ENCODE measurements at regions of chr3 and their contacts with region 1.

Region 1: DNA sequence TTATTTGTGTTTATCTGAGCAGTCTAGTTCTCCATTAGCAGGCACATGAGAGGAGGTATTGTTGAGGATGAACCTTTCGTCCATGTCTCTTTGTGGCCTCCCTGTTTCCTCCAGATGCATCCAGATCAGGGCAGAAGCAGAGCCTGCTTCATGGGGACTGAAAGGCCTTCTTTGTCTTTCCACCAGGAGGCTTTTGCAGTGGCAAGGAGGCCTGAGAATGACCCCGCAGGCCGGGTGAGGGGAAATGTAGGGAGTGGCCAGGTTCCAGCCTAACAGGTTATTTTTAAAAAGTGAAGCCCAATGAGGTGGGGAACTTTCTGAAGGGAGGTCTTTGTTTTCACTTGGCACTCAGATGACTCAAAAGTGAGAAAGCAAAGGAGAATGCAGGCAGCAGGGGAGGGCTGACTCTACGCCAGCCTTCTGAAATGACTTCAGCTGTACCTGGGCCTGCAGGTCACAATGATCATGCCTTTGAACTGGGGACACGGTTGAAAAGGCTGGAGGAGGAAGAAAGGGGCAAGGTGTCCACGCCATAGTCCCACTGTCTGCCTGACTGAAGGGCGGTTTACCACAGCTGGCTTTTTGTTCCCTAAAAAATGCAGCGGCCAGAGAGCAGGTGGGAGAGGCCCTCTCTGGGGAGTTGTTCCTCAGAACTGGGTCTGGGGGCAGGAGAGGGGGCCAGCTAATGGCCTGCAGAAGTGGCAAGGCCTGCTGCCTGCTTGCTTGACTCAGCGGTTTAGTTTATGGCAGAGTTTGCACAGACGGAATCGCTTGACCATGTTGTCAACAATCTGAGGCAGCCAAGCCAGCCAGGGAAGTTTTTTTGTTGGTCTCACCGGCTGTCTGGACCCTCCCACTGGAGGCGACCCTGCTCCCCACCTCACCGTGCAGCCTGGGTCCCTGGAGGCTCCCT is 28.7 kb downstream of the CMTM7 start:
- DNase-seq: peak in 1 of 5 donors; percentile 57
- H3K4me3 ChIP-seq: no peak overlapping the region
- H3K4me3 Mint-ChIP-seq: peak overlapping the region in 5 of 7 donors; percentile 13 to 88 (median 47)
- H3K27ac ChIP-seq: no peak overlapping the region
- H3K27ac Mint-ChIP-seq: peak overlapping the region; percentile 51 to 98 (median 78)
- H3K4me1 ChIP-seq: peaks cover 94% of the 10 kb centered on the region
- H3K4me1 Mint-ChIP-seq: peaks cover 68 to 98% (median 82%) of the 10 kb centered on the region in 3 donors
- H3K27me3 ChIP-seq: no peaks in the 10 kb centered on the region
- H3K27me3 Mint-ChIP-seq: peaks cover 0 to 3% of the 10 kb centered on the region in 2 donors

Region 2: GRCh38 chr3:32401556-32402081 is 18.8 kb before region 1 on chr3:
- CTCF ChIA-PET with region 1: interaction called, 13 read pairs
- POLR2A ChIA-PET with region 1: interaction called, 6 read pairs
- DNase-seq: peak; percentile 38 to 78 (median 57)
- H3K4me3 ChIP-seq: peak overlapping the region; percentile 67
- H3K4me3 Mint-ChIP-seq: peak overlapping the region; percentile 84 to 98 (median 91)
- H3K27ac ChIP-seq: peak overlapping the region; percentile 73
- H3K27ac Mint-ChIP-seq: peak overlapping the region; percentile 93 to 99 (median 96)
- H3K4me1 ChIP-seq: peaks cover 48% of the 10 kb centered on the region
- H3K4me1 Mint-ChIP-seq: peaks cover 52 to 90% (median 65%) of the 10 kb centered on the region in 3 donors
- H3K27me3 ChIP-seq: no peaks in the 10 kb centered on the region
- H3K27me3 Mint-ChIP-seq: no peaks in the 10 kb centered on the region

Region 3: DNA sequence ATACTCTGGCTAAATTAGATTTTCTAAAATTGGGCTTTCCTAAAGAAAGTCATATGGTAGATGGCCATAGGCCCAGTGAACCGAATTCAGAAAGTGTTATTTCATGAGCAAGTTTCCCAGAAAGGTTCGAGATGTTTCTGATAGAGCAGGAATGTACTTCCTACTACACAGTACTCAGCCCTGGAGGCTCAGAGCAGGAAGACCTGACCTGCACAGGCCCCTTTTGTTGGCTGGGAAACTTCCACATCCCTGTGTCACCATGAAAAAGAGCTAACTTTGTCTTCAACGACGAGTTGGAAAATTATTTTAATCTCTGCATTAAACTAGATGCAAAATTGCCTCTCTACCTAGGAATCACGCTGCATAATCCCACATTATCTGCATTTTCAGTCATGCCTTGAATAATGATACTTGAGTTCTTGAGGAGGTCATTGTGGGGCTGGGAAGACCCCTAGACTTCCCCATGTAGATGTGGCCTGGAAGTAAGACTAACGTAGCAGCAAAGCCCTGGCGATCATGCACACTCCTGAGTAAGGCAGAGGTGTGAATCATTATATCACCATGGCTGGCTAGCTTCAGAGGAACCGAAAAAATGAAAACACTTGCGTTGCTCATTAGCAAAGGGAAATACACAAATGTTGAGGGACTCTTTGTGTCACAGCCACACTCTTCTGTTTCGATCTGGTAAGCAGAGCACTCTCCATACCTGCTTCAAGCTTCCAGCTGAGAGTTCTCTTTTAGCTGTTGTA is 18.4 kb after region 1 on chr3:
- CTCF ChIA-PET with region 1: interaction called, 62 read pairs
- POLR2A ChIA-PET with region 1: interaction called, 8 read pairs
- DNase-seq: no peak
- H3K4me3 ChIP-seq: no peak overlapping the region
- H3K4me3 Mint-ChIP-seq: peak overlapping the region; percentile 6 to 83 (median 64)
- H3K27ac ChIP-seq: no peak overlapping the region
- H3K27ac Mint-ChIP-seq: peak overlapping the region; percentile 82 to 95 (median 89)
- H3K4me1 ChIP-seq: peaks cover 49% of the 10 kb centered on the region
- H3K4me1 Mint-ChIP-seq: peaks cover 56 to 91% (median 60%) of the 10 kb centered on the region in 3 donors
- H3K27me3 ChIP-seq: no peaks in the 10 kb centered on the region
- H3K27me3 Mint-ChIP-seq: peaks cover 0 to 2% of the 10 kb centered on the region in 2 donors

Region 4: DNA sequence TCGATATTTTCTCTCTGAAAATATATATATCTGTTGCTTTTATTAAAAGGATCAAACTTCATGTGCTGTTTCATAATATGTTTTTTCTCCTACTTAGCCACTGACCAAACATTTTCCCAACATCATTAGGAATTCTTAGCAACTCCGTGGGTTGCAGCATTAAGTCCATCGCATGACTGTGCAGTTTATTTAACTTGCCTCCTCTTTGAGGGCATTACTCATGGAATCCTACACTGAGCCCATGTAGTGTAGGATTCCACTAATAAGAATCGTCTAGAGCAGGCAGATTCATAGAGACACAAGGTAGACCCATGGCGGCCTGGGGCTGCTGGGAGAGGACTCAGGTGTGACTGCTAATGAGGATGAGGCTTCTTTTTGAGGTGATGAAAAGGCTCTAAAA is 33.0 kb after region 1 on chr3:
- CTCF ChIA-PET with region 1: interaction called, 18 read pairs
- POLR2A ChIA-PET with region 1: interaction called, 40 read pairs
- DNase-seq: no peak
- H3K4me3 ChIP-seq: no peak overlapping the region
- H3K4me3 Mint-ChIP-seq: no peak overlapping the region
- H3K27ac ChIP-seq: no peak overlapping the region
- H3K27ac Mint-ChIP-seq: peak overlapping the region in 6 of 8 donors; percentile 32 to 79 (median 56)
- H3K4me1 ChIP-seq: peaks cover 41% of the 10 kb centered on the region
- H3K4me1 Mint-ChIP-seq: peaks cover 36 to 69% (median 51%) of the 10 kb centered on the region in 3 donors
- H3K27me3 ChIP-seq: no peaks in the 10 kb centered on the region
- H3K27me3 Mint-ChIP-seq: no peaks in the 10 kb centered on the region

Region 5: DNA sequence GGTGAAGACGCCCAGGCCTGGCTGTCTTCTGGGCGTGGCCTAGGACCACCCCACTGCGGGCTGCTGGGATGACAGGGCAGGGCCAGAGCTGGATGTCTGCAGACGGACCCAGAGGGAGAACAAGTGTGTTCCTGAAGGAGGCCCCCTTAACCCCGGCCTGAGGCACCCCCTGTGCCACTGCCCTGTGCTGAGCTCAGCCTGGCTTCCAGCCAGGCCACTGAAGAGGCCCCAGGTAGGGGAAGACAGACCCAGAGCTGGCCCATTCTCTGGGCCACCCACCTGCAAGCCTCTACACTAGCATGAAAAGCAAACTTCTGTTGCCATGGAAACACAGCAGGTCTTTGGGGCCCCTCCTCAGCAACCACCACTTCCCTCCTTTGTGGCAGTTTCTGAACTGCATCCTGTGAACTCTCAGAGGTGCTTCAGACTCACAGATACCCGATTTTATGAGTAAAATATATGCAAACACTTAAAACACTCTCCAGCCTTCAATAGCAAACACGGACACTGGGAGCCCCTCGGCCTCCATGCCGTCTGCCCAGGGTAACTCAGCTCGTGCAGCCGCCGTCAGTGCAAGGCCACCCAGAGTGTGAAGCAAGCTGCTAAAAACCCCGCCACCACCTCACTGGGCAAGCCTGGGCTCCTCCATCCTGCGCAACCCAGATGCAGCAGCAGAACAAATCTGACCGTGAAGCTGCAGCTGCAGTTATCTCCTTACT is 39.8 kb after region 1 on chr3:
- CTCF ChIA-PET with region 1: interaction called, 18 read pairs
- POLR2A ChIA-PET with region 1: interaction called, 40 read pairs
- DNase-seq: peak; percentile 59 to 96 (median 92)
- H3K4me3 ChIP-seq: peak overlapping the region; percentile 53
- H3K4me3 Mint-ChIP-seq: peak overlapping the region in 4 of 7 donors; percentile 81 to 88 (median 88)
- H3K27ac ChIP-seq: peak overlapping the region; percentile 88
- H3K27ac Mint-ChIP-seq: no peak overlapping the region
- H3K4me1 ChIP-seq: peaks cover 83% of the 10 kb centered on the region
- H3K4me1 Mint-ChIP-seq: peaks cover 31 to 37% (median 33%) of the 10 kb centered on the region in 3 donors
- H3K27me3 ChIP-seq: no peaks in the 10 kb centered on the region
- H3K27me3 Mint-ChIP-seq: no peaks in the 10 kb centered on the region